ENCODE measurements at regions of chr12 and their contacts with region 1.

Region 1: DNA sequence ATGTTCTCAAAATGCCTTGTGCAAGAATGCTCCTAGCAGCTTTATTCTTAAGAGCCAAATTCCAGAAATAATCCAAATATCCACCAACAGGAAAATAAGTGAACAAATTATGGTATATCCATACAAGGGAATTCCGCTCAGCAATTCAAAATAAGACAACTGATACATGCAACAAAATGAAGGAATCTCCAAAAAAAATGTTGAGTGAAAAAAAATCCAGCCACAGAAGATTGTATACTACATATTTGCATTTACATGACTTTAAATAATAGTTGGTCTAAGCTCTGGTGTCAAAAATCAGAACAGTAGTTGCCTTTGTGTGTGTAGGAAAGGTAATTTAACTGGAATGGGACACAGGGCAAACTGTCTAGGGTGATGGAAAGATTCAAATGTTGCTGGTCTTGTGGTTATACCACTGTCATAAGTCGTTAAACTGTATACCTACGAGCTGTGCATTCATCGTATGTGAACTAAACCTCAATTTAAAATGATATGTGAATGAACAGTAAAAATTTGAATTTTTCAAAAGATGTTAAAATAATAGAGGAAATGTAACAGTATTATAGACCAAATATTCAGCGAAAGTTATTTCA is 3.2 kb downstream of the CD69 start:
- DNase-seq: no peak
- ATAC-seq: no peak
- H3K4me3 ChIP-seq: peak overlapping the region in 1 of 2 donors; percentile 47
- H3K27ac ChIP-seq: no peak overlapping the region
- H3K4me1 ChIP-seq: peaks cover 0 to 20% of the 10 kb centered on the region in 2 donors
- H3K27me3 ChIP-seq: no peaks in the 10 kb centered on the region
- CTCF ChIP-seq: no peak

Region 2: GRCh38 chr12:9797722-9798619 is 40.4 kb after region 1 on chr12:
- intact Hi-C with region 1: loop called in 1 of 2 experiments (anchors 5 kb)
- DNase-seq: peak in 3 of 4 donors; percentile 42 to 85 (median 52)
- ATAC-seq: peak; percentile 100
- H3K4me3 ChIP-seq: no peak overlapping the region
- H3K27ac ChIP-seq: no peak overlapping the region
- H3K4me1 ChIP-seq: peaks cover 0 to 28% of the 10 kb centered on the region in 2 donors
- H3K27me3 ChIP-seq: no peaks in the 10 kb centered on the region
- CTCF ChIP-seq: peak in 1 of 2 donors; percentile 45